ENCODE measurements at regions of chr7 and their contacts with region 1.

Region 1: DNA sequence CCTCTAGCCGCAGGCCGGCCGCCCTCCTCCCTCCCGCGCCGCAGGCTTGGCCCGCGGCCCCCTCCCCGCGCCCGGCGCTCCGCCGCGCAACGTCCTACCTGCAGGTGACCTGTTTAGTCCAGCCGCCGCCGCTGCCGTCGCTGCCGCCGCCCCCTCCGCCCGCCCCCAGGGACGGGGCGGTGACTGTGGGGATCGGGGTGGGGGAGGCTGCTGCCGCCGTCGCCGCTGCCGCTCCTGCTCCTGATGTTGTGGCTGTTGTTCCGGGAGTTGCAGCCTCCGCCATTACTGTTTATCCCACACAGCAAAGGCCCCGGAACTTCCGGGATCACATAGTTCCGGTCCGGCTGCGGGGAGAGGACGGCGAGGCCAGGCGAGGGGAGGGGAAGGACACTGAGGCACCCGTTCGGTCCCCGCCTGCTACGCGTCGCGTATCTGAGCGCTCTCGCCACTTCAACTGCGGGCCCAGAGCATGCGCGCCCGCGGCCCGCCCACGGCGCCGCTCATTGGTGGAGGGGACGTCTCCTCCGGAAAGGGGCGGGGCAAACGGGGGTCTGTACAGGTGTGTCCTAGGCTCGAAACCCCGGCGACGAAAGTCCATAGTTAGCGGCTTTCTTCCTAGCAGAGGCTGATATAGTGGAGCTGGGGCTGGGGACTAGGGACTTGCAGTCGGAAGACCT is at the start of gene MKRN1:
- DNase-seq: peak; percentile 94
- ATAC-seq: peak; percentile 88
- H3K4me3 ChIP-seq: peak within 1 kb of the TSS; percentile 90 to 96 (median 93)
- H3K4me3 Mint-ChIP-seq: peak within 1 kb of the TSS; percentile 91
- H3K27ac ChIP-seq: peak within 1 kb of the TSS; percentile 83 to 86
- H3K27ac Mint-ChIP-seq: peak within 1 kb of the TSS; percentile 99
- H3K4me1 ChIP-seq: peaks cover 26 to 27% of the 10 kb centered on the region in 2 donors
- H3K4me1 Mint-ChIP-seq: peaks cover 31% of the 10 kb centered on the region
- H3K27me3 ChIP-seq: no peaks in the 10 kb centered on the region
- H3K27me3 Mint-ChIP-seq: peaks cover 2% of the 10 kb centered on the region
- CTCF ChIP-seq: no peak
- total RNA-seq, gene MKRN1: 146 and 147 TPM in 2 replicates

Region 2: GRCh38 chr7:140022582-140023211 is 456.5 kb before region 1 on chr7:
- CTCF ChIA-PET with region 1: no interaction called
- POLR2A ChIA-PET with region 1: no interaction called
- intact Hi-C with region 1: no loop called
- DNase-seq: no peak
- ATAC-seq: no peak
- H3K4me3 ChIP-seq: no peak overlapping the region
- H3K4me3 Mint-ChIP-seq: no peak overlapping the region
- H3K27ac ChIP-seq: no peak overlapping the region
- H3K27ac Mint-ChIP-seq: no peak overlapping the region
- H3K4me1 ChIP-seq: no peaks in the 10 kb centered on the region
- H3K4me1 Mint-ChIP-seq: no peaks in the 10 kb centered on the region
- H3K27me3 ChIP-seq: no peaks in the 10 kb centered on the region
- H3K27me3 Mint-ChIP-seq: no peaks in the 10 kb centered on the region
- CTCF ChIP-seq: no peak

Region 3: DNA sequence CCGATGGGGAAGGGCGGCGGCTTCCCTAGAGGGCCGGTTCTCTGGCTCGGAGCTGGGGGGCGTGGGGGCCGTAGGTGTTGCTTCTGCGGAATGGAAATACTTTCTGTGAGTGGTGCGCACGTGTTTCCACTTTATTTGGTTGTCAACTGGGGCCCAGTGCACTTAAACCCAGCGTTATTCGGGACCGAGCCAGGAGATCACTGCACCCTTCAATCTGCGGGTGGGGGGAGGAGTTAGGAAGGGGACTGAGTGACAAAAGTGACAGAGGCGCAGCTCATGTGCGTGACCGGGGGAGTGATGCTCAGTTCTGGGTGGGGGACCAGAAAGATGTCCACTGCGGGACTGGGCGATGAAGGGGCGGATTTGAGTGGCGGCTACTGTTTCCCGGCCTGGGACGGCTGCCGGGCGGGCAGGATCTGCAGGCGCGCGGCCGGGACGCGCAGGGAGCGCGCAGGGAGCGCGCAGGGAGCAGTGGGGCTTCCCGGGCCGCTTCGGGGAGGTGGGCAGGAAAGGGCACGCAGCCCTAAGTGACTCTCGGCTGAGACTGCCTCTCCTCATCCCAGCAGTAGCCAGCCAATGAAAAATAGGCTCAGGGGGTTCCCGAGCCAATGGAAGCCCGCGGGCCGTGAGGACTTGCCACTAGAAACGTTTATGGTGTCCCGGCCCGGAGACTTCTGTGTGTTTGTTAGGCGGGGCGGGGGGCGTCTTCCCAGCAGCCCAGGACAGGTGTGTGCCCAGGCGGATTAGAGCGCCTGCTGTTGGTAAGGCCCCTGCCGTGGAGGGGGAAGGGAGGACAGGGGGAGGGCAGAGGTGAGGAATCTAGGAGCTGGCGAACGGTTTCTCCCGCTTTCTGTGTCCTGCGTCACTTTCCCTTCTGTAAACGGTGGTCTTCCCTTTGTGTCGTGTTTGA is 248.1 kb before region 1 on chr7:
- CTCF ChIA-PET with region 1: no interaction called
- POLR2A ChIA-PET with region 1: interaction called, 10 read pairs
- intact Hi-C with region 1: loop called (anchors 5 kb)
- DNase-seq: peak; percentile 69
- ATAC-seq: peak; percentile 10
- H3K4me3 ChIP-seq: peak overlapping the region; percentile 57 to 80 (median 64)
- H3K4me3 Mint-ChIP-seq: peak overlapping the region; percentile 90
- H3K27ac ChIP-seq: peak overlapping the region; percentile 93 to 96
- H3K27ac Mint-ChIP-seq: peak overlapping the region; percentile 99
- H3K4me1 ChIP-seq: peaks cover 49 to 74% of the 10 kb centered on the region in 2 donors
- H3K4me1 Mint-ChIP-seq: peaks cover 58% of the 10 kb centered on the region
- H3K27me3 ChIP-seq: no peaks in the 10 kb centered on the region
- H3K27me3 Mint-ChIP-seq: no peaks in the 10 kb centered on the region
- CTCF ChIP-seq: no peak

Region 4: DNA sequence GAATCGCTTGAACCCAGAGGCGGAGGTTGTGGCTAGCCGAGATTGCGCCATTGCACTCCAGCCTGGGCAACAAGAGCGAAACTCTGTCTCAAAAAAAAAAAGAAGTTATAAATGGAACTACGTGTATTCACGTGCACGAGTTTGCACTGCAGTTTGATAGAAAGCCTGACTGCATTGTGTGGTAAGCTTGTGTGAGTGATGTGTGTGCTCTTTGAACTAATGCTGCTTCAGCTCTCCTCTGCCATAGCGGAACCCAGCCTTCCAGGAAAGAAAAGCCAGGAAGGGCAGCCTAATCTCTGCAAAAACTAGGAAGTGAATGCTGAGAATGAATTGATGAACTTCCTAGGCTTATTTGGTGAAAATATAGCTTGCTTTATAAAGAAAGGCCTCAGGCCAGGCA is 15.7 kb after region 1 on chr7:
- CTCF ChIA-PET with region 1: interaction called, 96 read pairs
- POLR2A ChIA-PET with region 1: interaction called, 5 read pairs
- intact Hi-C with region 1: loop called (anchors 1 kb)
- DNase-seq: no peak
- ATAC-seq: no peak
- H3K4me3 ChIP-seq: no peak overlapping the region
- H3K4me3 Mint-ChIP-seq: no peak overlapping the region
- H3K27ac ChIP-seq: no peak overlapping the region
- H3K27ac Mint-ChIP-seq: no peak overlapping the region
- H3K4me1 ChIP-seq: no peaks in the 10 kb centered on the region
- H3K4me1 Mint-ChIP-seq: no peaks in the 10 kb centered on the region
- H3K27me3 ChIP-seq: no peaks in the 10 kb centered on the region
- H3K27me3 Mint-ChIP-seq: no peaks in the 10 kb centered on the region
- CTCF ChIP-seq: no peak

Region 5: DNA sequence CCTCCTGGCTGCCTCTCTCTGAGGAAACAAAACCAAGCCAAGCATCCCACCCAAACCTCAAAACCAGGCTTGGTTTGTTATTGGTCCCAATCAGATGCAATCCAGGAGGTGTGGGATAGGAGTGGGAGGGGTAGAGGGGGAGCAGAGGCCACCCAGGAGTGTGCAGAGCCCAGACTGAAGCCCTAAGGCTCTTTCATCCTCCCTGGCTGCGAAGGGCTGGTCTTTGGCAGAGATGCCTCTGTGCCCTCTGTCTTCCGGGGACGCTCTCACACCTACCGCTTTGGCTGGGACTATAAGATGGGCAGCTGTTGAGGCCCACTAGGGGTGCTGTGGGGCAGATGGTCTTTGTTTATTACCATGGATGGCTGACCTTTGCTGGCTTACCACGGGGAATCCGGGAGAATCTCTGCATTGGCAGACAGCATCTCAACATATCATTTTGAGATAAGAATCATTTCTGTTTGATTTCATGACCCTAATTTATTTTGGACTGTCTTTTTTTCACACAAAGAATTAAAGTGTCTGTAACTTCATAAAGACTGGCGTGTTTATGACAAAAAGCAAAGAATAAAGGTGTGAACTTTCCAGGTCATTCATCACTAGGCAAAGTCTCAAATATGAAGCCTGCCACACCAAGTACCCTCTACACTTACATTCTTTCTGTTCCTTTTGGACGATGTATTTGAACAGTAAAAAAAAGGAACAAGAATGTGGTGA is 167.9 kb after region 1 on chr7:
- CTCF ChIA-PET with region 1: interaction called, 26 read pairs
- POLR2A ChIA-PET with region 1: no interaction called
- intact Hi-C with region 1: no loop called
- DNase-seq: peak; percentile 69
- ATAC-seq: peak; percentile 98
- H3K4me3 ChIP-seq: no peak overlapping the region
- H3K4me3 Mint-ChIP-seq: no peak overlapping the region
- H3K27ac ChIP-seq: no peak overlapping the region
- H3K27ac Mint-ChIP-seq: peak overlapping the region; percentile 29
- H3K4me1 ChIP-seq: peaks cover 9 to 13% of the 10 kb centered on the region in 2 donors
- H3K4me1 Mint-ChIP-seq: peaks cover 11% of the 10 kb centered on the region
- H3K27me3 ChIP-seq: peaks cover 0 to 6% (median 3%) of the 10 kb centered on the region in 4 experiments
- H3K27me3 Mint-ChIP-seq: peaks cover 15% of the 10 kb centered on the region
- CTCF ChIP-seq: peak; percentile 77

Region 6: DNA sequence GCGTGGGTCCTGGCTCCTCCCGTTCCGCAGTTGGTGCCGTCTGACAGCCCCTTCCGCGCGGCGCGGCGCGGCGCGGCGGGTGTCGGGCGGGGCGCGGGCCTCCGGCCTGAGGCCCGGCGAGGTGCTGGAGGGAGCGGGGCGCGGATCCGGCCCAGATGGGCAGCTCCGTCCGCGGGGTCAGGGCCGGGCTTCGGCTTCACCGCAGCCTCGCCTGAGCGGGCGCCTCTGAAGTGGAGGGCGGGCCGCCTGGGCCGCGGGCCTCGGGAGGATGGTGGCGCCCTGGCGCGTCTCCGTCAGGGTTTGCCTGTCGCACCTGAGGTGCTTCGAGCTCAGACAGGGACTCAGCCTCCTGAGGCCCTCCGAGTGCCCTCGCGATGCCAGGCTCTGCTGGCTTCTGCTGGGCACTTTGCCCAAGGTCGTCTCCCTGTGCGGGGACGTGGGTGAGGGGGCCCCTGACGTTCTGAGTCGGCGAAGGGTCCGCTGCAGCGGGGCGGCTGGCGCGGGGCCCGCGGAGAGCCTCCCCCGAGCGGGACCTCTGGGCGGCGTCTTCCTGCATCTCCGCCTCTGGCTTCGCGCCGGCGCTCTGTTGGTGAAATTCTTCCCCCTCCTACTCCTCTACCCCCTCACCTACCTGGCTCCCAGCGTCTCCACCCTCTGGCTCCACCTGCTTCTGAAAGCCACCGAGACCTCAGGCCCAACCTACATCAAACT is 194.0 kb after region 1 on chr7:
- CTCF ChIA-PET with region 1: interaction called, 3 read pairs
- POLR2A ChIA-PET with region 1: interaction called, 3 read pairs
- intact Hi-C with region 1: loop called (anchors 2 kb)
- DNase-seq: peak; percentile 83
- ATAC-seq: peak; percentile 55
- H3K4me3 ChIP-seq: peak overlapping the region; percentile 4 to 76 (median 70)
- H3K4me3 Mint-ChIP-seq: peak overlapping the region; percentile 87
- H3K27ac ChIP-seq: peak overlapping the region; percentile 48 to 79
- H3K27ac Mint-ChIP-seq: peak overlapping the region; percentile 91
- H3K4me1 ChIP-seq: peaks cover 46 to 54% of the 10 kb centered on the region in 2 donors
- H3K4me1 Mint-ChIP-seq: peaks cover 52% of the 10 kb centered on the region
- H3K27me3 ChIP-seq: no peaks in the 10 kb centered on the region
- H3K27me3 Mint-ChIP-seq: no peaks in the 10 kb centered on the region
- CTCF ChIP-seq: no peak

Region 7: DNA sequence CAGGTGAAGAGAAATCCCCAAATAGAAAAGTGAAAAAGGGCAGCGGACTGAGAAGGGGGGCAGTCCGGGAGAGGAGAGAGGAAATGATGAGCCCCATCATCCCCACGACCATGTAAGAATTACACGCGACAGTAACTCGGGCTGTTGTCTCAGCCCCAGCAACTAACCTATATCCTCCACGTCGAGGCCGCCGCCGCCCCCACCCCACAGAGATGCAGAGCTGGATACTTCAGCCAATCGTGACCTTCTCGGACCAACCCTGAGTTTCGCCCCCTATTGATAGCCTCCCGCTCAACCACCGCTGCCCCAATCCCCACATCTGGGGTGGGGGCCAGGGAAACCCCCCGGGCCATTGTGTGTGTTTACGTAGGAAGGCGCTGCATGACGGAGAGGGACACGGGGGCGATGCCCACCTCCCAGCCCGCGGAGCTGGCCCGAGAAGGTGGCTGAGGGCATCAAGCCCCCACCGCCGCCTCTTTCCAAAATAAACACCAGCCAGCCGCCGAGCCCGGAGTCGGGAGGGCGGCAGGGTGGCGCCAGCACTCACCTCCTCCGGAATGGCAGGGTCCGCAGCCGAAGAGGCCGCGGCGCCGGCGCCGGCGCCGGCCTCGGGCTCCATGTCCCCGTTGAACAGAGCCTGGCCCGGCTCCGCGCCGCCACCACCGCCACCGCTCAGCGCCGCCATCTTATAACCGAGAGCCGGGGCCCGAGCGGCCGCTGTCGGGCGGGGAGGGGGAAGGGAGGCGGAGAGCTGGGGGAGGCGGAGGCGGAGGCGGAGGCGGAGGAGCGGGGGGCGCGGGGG is 445.0 kb after region 1 on chr7:
- CTCF ChIA-PET with region 1: no interaction called
- POLR2A ChIA-PET with region 1: no interaction called
- intact Hi-C with region 1: loop called (anchors 5 kb)
- DNase-seq: peak; percentile 97
- ATAC-seq: peak; percentile 74
- H3K4me3 ChIP-seq: peak overlapping the region; percentile 73 to 92 (median 92)
- H3K4me3 Mint-ChIP-seq: no peak overlapping the region
- H3K27ac ChIP-seq: peak overlapping the region; percentile 93 to 98
- H3K27ac Mint-ChIP-seq: no peak overlapping the region
- H3K4me1 ChIP-seq: peaks cover 16 to 27% of the 10 kb centered on the region in 2 donors
- H3K4me1 Mint-ChIP-seq: peaks cover 21% of the 10 kb centered on the region
- H3K27me3 ChIP-seq: no peaks in the 10 kb centered on the region
- H3K27me3 Mint-ChIP-seq: no peaks in the 10 kb centered on the region
- CTCF ChIP-seq: peak; percentile 48

Measured in B cell (primary cell).